ENCODE measurements at regions of chr2 and their contacts with region 1.

Region 1: DNA sequence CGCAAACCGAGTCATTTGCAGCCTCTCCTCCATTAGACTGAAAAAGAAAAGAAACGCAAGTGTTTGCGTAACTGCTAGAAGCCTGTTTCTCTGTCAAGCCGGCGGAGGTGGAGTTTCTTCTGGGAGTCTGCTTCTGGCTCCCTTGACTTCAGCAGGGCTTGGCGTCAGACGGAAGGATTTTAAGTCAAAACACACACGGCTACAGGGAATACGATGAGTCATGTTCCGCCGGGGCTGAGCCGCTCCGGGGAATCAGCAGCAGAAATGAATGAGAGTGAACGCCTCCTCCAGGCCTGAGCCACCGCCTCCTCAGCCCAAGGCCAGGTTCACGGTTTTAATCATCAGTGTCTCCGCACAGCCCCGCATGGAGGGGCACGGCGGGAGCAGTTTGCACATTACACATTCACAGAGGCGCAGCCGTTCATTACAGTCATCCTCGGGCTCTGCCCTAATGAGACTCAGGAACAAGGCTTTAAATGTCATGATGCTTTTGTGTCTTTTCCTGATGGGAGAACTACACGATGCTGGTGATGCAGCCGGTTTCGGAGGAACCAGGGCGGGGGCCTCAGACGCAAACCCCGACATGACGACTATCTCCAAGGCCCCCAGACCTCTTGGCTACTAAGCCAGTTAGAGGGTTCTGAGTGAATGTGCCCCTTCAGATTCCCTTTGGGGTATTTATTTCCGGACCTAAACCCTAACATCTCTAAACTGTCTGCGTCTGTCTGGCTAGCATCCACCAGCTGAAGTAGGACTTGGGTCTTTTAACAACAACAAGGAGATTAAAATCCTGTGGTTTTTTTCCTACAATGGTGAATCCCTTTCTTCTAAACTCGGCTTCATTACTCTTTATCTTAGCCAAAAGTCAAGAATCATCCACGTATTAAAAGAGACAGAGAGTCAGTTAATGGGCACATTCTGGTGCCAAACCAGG is 11.1 kb upstream of the SCG2 start:
- DNase-seq: peak; percentile 79 to 80
- ATAC-seq: peak; percentile 56 to 86 (median 82)
- H3K4me3 ChIP-seq: peak overlapping the region; percentile 54
- H3K27ac ChIP-seq: peak overlapping the region; percentile 30
- H3K4me1 ChIP-seq: peaks cover 4% of the 10 kb centered on the region
- H3K27me3 ChIP-seq: peaks cover 0 to 28% (median 2%) of the 10 kb centered on the region in 3 donors
- CTCF ChIP-seq: no peak

Region 2: DNA sequence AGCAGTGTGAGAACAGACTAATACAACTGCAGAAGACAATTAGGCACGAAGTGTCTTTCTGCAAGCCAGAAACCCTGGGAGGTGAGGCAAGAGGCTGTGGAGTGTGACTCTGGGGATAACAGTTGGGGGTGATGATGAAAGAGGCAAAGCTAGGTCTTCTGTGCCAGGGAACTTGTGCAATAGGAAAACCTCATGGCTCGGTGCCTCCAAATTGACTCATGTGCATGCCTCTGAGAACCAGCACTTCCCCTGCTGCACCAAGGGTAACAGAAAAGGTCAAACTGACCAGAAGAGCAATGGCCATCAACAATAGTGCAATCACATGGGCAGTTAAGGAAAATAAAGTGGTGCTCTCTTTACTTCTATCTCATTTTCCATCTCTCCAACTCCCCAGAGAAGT is 147.5 kb before region 1 on chr2:
- intact Hi-C with region 1: loop called in 1 of 2 experiments (anchors 10 kb)
- DNase-seq: peak; percentile 85 to 86
- ATAC-seq: peak; percentile 82 to 95 (median 94)
- H3K4me3 ChIP-seq: no peak overlapping the region
- H3K27ac ChIP-seq: peak overlapping the region; percentile 16
- H3K4me1 ChIP-seq: no peaks in the 10 kb centered on the region
- H3K27me3 ChIP-seq: no peaks in the 10 kb centered on the region
- CTCF ChIP-seq: no peak

Region 3: DNA sequence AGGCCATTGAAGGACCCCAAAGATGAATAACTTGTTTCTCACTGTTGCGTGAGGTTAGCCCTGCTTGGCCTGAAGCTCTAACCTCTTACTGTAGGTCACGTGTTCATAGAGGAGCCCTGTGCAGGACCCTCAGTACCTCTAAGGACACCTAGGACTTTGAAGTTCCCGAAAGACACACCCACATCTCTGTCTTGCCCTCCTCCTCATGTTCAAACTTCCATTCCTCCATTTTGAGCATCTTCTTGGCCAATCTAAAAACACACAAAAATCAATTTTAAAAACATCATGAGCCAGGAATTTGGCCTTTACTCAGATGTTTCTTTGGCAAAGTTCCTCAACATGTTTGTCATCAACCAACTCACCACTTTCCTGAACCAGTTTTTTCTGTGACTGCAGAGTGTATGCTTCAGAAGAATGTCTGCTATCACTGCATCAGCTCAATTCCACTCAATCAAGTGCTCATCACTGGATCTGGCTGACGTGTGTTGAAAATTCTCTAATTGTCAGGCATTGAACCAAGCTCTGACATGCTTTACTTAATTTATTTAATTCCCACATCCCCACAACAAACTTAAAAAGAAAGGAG is 122.5 kb after region 1 on chr2:
- intact Hi-C with region 1: no loop called
- DNase-seq: no peak
- ATAC-seq: no peak
- H3K4me3 ChIP-seq: no peak overlapping the region
- H3K27ac ChIP-seq: no peak overlapping the region
- H3K4me1 ChIP-seq: no peaks in the 10 kb centered on the region
- H3K27me3 ChIP-seq: no peaks in the 10 kb centered on the region
- CTCF ChIP-seq: no peak

Measured in psoas muscle (tissue), 8 donors.